HEK293 (cell line): ENCODE measurements at regions of chr2 and their contacts with region 1.

Region 1: DNA sequence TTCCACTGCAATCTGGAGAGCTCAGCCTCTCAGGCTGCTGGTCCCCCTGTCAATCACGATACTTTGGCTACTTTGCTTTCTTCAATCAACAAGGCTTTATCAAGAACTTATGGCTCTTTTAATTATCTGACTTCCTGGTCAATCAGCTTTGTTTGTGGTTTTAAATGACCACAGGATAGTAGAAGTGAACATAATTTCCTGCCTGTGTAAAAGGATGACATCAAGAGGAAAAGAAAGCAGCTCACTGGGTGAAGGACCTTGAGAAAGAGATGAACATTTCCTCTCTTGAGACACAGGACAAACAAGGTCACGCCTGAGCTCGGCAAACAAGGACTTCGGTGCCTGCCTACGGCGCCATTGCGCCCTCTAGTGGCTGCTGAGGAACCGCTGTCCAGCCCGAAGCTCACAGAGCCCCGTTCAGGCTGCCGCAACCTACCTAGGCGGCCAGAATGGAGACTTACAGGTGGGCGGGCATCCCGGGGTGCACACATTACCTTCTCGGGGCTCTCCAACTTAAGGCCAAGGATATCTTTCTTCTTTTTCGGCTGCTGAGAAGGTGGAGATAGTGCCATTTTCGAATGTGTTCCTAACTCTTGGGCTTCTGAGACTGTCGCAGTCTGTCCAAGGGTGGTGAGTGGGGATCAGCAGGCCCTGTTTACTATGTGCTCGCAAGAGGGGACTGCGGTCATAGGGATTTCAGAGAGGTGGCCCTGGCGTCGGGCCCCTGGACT is 54.0 kb downstream of the IL1RL2 start:
- H3K4me3 ChIP-seq: no peak overlapping the region
- H3K27ac ChIP-seq: no peak overlapping the region
- H3K4me1 ChIP-seq: no peaks in the 10 kb centered on the region
- CTCF ChIP-seq: peak; percentile 76

Region 2: GRCh38 chr2:101883863-101884262 is 356.9 kb before region 1 on chr2:
- CTCF ChIA-PET with region 1: interaction called, 23 read pairs
- POLR2A ChIA-PET with region 1: no interaction called
- H3K4me3 ChIP-seq: no peak overlapping the region
- H3K27ac ChIP-seq: no peak overlapping the region
- H3K4me1 ChIP-seq: no peaks in the 10 kb centered on the region
- CTCF ChIP-seq: 0 out of 2 replicates have a peak, but pooled peaks have one; percentile 30

Region 3: DNA sequence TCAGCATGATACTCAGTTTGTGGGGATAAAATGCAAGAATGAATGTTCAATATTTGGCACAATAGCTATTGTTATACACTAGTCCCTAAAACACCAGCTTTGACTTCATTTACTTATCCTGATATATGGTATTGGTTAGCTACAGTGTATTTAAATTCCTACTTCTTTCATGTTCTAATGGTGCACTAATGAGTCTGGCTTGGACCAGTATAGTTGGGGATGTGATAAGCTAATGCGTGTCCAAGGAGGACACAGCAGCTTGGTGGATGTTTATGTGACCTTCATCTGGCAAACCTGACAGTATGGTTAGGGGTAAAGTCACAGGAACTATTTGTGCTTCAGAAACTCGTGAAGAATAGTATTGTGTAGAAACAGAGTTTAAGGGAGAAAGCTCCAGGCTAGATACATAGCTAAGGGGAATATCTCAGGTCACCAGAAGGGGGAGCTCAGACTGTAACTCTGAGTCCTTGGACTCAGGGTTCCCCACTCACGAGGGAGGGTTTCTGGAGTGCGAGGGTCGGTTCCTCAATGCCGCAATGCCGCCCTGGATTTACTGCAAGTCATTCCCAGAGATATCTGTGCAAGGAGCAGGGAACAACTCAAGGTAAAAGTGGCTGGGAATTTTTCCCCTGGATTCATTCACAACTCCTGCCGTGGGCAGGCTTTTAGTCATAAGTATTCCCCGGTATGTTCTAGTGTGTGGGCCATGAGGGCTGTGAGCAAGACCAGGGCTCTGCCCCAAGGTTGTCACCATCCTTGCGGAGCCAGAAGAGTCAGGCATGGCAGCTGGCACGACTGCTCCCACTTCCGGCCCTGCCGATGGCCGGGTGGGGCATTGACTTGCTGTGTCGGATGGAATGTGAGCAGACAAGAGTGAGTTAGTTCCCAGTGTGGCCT is 234.6 kb before region 1 on chr2:
- CTCF ChIA-PET with region 1: interaction called, 33 read pairs
- POLR2A ChIA-PET with region 1: interaction called, 3 read pairs
- H3K4me3 ChIP-seq: no peak overlapping the region
- H3K27ac ChIP-seq: no peak overlapping the region
- H3K4me1 ChIP-seq: no peaks in the 10 kb centered on the region
- CTCF ChIP-seq: peak; percentile 19; the same call in 1 of the 2 replicates

Region 4: DNA sequence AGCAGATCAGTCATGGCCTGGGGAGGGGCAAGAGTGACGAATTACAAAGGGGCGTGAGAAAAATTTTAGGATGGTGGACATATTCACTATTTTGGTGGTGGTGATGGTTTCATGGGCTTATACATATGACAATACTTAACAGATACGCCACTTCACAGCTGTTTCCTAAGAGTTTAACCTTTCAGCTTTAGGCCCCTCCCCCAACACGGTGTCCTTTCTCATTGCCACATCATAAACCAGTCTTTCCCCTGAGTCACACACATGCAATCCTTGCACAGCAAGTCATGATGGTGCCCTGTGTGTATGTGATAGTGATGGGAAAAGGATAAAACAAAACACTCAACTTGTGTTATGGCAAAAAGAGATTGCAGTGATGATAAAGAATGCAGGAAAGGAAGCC is 145.9 kb before region 1 on chr2:
- CTCF ChIA-PET with region 1: interaction called, 11 read pairs
- POLR2A ChIA-PET with region 1: no interaction called
- H3K4me3 ChIP-seq: no peak overlapping the region
- H3K27ac ChIP-seq: no peak overlapping the region
- H3K4me1 ChIP-seq: no peaks in the 10 kb centered on the region
- CTCF ChIP-seq: no peak

Region 5: GRCh38 chr2:102229141-102229769 is 11.6 kb before region 1 on chr2:
- CTCF ChIA-PET with region 1: interaction called, 19 read pairs
- POLR2A ChIA-PET with region 1: no interaction called
- H3K4me3 ChIP-seq: no peak overlapping the region
- H3K27ac ChIP-seq: no peak overlapping the region
- H3K4me1 ChIP-seq: no peaks in the 10 kb centered on the region
- CTCF ChIP-seq: no peak

Region 6: GRCh38 chr2:102442967-102443828 is 202.4 kb after region 1 on chr2:
- CTCF ChIA-PET with region 1: interaction called, 15 read pairs
- POLR2A ChIA-PET with region 1: no interaction called
- H3K4me3 ChIP-seq: no peak overlapping the region
- H3K27ac ChIP-seq: no peak overlapping the region
- H3K4me1 ChIP-seq: no peaks in the 10 kb centered on the region
- CTCF ChIP-seq: 0 out of 2 replicates have a peak, but pooled peaks have one; percentile 12